ENCODE measurements at regions of chr18 and their contacts with region 1.

Region 1: DNA sequence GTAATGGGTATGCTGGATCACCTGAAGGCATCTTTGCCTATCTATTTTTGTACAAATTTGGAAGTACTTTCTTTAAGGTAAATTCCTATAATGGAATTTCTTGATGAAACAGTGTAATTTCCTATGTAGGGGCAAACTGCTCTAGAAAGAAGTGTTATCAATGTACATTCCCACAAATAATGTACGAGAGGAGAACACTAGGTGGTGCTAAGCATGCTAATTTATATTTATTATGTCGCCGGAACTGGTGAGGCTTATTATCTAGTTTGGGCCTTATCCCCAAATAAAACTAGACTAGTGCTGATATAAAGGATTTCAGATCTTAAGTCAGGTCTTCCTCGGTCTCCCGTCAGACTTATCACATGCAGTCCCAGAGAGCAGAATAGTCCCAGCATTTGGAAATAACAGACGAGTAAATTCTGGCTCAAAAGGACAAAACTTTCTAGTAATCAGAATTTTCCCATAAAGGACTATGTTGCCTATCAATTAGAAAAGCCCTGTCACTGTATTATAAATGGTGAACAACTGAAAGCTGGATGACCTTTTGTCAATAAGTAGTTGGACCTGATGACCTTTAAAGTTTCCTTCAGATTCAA is 86.9 kb upstream of the RBBP8 start:
- DNase-seq: no peak
- H3K4me3 ChIP-seq: no peak overlapping the region
- H3K27ac ChIP-seq: peak overlapping the region; percentile 85
- H3K4me1 ChIP-seq: peaks cover 75% of the 10 kb centered on the region
- H3K27me3 ChIP-seq: no peaks in the 10 kb centered on the region
- CTCF ChIP-seq: peak; percentile 53 to 68

Region 2: DNA sequence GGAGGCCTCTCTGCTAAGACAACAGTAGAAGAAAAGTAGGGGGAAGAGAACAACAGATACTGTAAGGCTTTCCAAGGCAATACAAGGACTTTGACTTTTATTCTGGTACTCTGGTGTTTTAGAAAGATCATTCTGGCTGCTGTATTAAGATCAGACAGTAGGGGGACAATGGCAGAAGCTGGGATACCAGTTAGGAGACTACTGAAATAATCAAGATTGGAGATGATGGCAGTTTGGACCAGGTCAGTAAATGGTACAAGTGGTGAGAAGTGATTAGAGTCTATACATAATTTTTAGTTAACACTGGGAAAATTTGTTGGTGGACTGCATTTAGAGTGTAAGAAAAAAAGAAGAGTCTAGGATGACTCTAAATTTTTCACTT is 1874.3 kb before region 1 on chr18:
- CTCF ChIA-PET with region 1: interaction called, 18 read pairs
- dilution Hi-C with region 1: no loop called
- in situ Hi-C with region 1: no loop called
- intact Hi-C with region 1: no loop called
- DNase-seq: peak; percentile 17
- H3K4me3 ChIP-seq: no peak overlapping the region
- H3K27ac ChIP-seq: no peak overlapping the region
- H3K4me1 ChIP-seq: no peaks in the 10 kb centered on the region
- H3K27me3 ChIP-seq: no peaks in the 10 kb centered on the region
- CTCF ChIP-seq: peak; percentile 57 to 60

Region 3: GRCh38 chr18:22551536-22552151 is 294.5 kb before region 1 on chr18:
- CTCF ChIA-PET with region 1: no interaction called
- dilution Hi-C with region 1: no loop called
- in situ Hi-C with region 1: no loop called
- intact Hi-C with region 1: no loop called
- DNase-seq: peak; percentile 99
- H3K4me3 ChIP-seq: no peak overlapping the region
- H3K27ac ChIP-seq: peak overlapping the region; percentile 98
- H3K4me1 ChIP-seq: peaks cover 44% of the 10 kb centered on the region
- H3K27me3 ChIP-seq: no peaks in the 10 kb centered on the region
- CTCF ChIP-seq: no peak

Region 4: GRCh38 chr18:22831441-22831904 is 14.7 kb before region 1 on chr18:
- CTCF ChIA-PET with region 1: interaction called, 4 read pairs
- dilution Hi-C with region 1: no loop called
- in situ Hi-C with region 1: no loop called
- intact Hi-C with region 1: loop called (anchors 1 kb)
- DNase-seq: peak; percentile 87
- H3K4me3 ChIP-seq: no peak overlapping the region
- H3K27ac ChIP-seq: peak overlapping the region; percentile 68
- H3K4me1 ChIP-seq: peaks cover 38% of the 10 kb centered on the region
- H3K27me3 ChIP-seq: no peaks in the 10 kb centered on the region
- CTCF ChIP-seq: no peak

Region 5: DNA sequence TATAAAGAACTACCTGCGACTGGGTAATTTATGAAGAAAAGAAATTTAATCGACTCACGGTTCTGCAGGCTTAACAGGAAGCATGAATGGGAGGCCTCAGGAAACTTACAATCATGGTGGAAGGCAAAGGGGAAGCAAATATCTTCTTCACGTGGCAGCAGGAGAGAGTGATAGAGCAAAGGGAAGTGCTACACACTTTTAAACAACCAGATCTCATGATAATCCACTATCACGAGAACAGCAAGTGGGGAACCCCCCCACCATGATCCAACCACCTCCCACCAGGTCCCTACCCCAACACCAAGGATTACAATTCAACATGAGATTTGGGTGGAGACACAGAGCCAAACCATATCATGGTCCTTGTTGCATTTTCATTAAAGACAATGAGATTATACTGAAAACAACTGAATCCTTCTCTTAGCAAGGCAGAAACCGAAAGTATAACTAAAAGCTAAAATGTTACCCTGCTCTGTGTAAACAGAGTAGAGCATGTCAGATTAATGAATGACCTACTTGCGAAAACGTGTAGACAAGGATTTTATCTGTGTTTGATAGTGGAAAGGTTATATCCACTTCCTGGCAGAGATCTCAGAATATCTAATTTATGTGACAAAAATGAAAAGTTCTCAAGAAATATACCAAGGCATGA is 26.8 kb after region 1 on chr18:
- CTCF ChIA-PET with region 1: interaction called, 13 read pairs
- dilution Hi-C with region 1: no loop called
- in situ Hi-C with region 1: no loop called
- intact Hi-C with region 1: no loop called
- DNase-seq: no peak
- H3K4me3 ChIP-seq: no peak overlapping the region
- H3K27ac ChIP-seq: no peak overlapping the region
- H3K4me1 ChIP-seq: peaks cover 19% of the 10 kb centered on the region
- H3K27me3 ChIP-seq: no peaks in the 10 kb centered on the region
- CTCF ChIP-seq: no peak

Region 6: GRCh38 chr18:22921772-22922171 is 75.6 kb after region 1 on chr18:
- CTCF ChIA-PET with region 1: no interaction called
- dilution Hi-C with region 1: no loop called
- in situ Hi-C with region 1: loop called (anchors 10 to 25 kb)
- intact Hi-C with region 1: no loop called
- DNase-seq: no peak
- H3K4me3 ChIP-seq: no peak overlapping the region
- H3K27ac ChIP-seq: no peak overlapping the region
- H3K4me1 ChIP-seq: peaks cover 33% of the 10 kb centered on the region
- H3K27me3 ChIP-seq: no peaks in the 10 kb centered on the region
- CTCF ChIP-seq: no peak

Region 7: DNA sequence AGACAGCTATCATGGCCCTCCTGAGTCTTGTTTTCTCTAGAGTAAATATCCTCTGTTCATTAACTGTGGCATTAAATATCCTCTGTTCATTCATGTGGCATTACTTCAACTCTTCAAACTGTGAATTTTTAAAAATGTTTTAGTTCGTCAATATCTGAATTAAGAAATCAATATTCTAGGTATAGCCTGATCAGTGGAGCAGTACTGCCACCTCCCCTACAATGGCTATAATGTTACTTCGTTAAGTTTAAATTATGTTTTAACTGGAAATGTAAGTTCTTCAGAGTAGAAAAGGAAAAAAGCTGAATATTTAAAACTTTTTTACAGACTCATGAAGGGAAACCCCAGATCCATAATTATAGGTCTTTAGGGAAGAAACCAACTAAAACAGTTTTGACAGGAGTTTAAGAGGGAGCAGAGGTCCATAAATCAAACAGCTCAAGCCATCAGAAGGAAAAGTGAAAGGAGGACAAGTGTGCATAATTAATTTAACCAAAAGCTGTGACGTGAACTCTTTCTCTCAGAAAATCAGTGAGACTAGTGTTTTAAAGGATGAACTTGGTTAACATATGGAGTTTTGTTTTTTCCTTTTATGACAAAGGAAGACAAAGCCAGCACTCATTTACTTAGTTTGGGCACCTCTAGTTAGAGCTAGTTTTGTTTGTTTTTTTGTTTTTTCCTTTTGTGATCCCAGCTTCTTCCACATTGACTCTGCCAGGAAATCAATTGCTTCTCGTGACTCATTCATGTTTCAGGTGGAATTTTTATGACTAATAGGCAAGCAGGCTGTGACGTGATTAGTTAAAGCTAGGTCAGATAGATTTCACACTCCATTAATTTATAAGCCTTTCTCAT is 131.9 kb after region 1 on chr18:
- CTCF ChIA-PET with region 1: interaction called, 4 read pairs
- dilution Hi-C with region 1: no loop called
- in situ Hi-C with region 1: no loop called
- intact Hi-C with region 1: loop called (anchors 10 kb)
- DNase-seq: peak; percentile 89
- H3K4me3 ChIP-seq: peak overlapping the region in 2 of 3 experiments; percentile 6 to 19
- H3K27ac ChIP-seq: peak overlapping the region; percentile 88
- H3K4me1 ChIP-seq: peaks cover 22% of the 10 kb centered on the region
- H3K27me3 ChIP-seq: no peaks in the 10 kb centered on the region
- CTCF ChIP-seq: no peak

Measured in mammary epithelial cell (primary cell).